Common myeloid progenitor, CD34-positive (primary cell): ENCODE measurements at regions of chr5 and their contacts with region 1.

Region 1: GRCh38 chr5:138241688-138242571 is 28.8 kb upstream of the CDC23 start:
- DNase-seq: peak; percentile 52 to 81 (median 69)
- H3K4me3 ChIP-seq: peak overlapping the region in 6 of 7 experiments; percentile 1 to 75 (median 60)
- H3K27ac ChIP-seq: peak overlapping the region in 1 of 2 experiments; percentile 34
- H3K4me1 ChIP-seq: peaks cover 15 to 45% (median 42%) of the 10 kb centered on the region in 4 experiments
- H3K27me3 ChIP-seq: no peaks in the 10 kb centered on the region

Region 2: GRCh38 chr5:138230981-138231589 is 10.8 kb before region 1 on chr5:
- CTCF ChIA-PET with region 1: interaction called, 135 read pairs
- POLR2A ChIA-PET with region 1: interaction called, 3 read pairs
- DNase-seq: peak in 2 of 3 donors; percentile 44 to 56
- H3K4me3 ChIP-seq: no peak overlapping the region
- H3K27ac ChIP-seq: no peak overlapping the region
- H3K4me1 ChIP-seq: peaks cover 0 to 8% (median 5%) of the 10 kb centered on the region in 4 experiments
- H3K27me3 ChIP-seq: peaks cover 0 to 5% (median 0%) of the 10 kb centered on the region in 5 experiments

Region 3: GRCh38 chr5:138274189-138274853 is 32.4 kb after region 1 on chr5 and contains the start of gene GFRA3:
- CTCF ChIA-PET with region 1: interaction called, 37 read pairs
- POLR2A ChIA-PET with region 1: interaction called, 16 read pairs
- DNase-seq: peak in 2 of 3 donors; percentile 31 to 49
- H3K4me3 ChIP-seq: peak within 1 kb of the TSS; percentile 3 to 72 (median 51)
- H3K27ac ChIP-seq: no peak within 1 kb of the TSS
- H3K4me1 ChIP-seq: peaks cover 0 to 29% (median 22%) of the 10 kb centered on the region in 4 experiments
- H3K27me3 ChIP-seq: peaks cover 0 to 22% (median 11%) of the 10 kb centered on the region in 5 experiments